Activated B cell treated with CpG ODN at 0.5 μM for 24 hours (primary cell): ENCODE measurements at regions of chr1 and their contacts with region 1.

Region 1: GRCh38 chr1:153633716-153634665 is at the start of gene CHTOP:
- DNase-seq: peak; percentile 98
- ATAC-seq: peak; percentile 86
- H3K4me3 Mint-ChIP-seq: peak within 1 kb of the TSS; percentile 99
- H3K27ac Mint-ChIP-seq: peak within 1 kb of the TSS; percentile 100
- H3K4me1 Mint-ChIP-seq: peaks cover 44% of the 10 kb centered on the region
- H3K27me3 Mint-ChIP-seq: no peaks in the 10 kb centered on the region
- CTCF ChIP-seq: no peak
- total RNA-seq, gene CHTOP: 140 and 148 TPM in 2 replicates

Region 2: DNA sequence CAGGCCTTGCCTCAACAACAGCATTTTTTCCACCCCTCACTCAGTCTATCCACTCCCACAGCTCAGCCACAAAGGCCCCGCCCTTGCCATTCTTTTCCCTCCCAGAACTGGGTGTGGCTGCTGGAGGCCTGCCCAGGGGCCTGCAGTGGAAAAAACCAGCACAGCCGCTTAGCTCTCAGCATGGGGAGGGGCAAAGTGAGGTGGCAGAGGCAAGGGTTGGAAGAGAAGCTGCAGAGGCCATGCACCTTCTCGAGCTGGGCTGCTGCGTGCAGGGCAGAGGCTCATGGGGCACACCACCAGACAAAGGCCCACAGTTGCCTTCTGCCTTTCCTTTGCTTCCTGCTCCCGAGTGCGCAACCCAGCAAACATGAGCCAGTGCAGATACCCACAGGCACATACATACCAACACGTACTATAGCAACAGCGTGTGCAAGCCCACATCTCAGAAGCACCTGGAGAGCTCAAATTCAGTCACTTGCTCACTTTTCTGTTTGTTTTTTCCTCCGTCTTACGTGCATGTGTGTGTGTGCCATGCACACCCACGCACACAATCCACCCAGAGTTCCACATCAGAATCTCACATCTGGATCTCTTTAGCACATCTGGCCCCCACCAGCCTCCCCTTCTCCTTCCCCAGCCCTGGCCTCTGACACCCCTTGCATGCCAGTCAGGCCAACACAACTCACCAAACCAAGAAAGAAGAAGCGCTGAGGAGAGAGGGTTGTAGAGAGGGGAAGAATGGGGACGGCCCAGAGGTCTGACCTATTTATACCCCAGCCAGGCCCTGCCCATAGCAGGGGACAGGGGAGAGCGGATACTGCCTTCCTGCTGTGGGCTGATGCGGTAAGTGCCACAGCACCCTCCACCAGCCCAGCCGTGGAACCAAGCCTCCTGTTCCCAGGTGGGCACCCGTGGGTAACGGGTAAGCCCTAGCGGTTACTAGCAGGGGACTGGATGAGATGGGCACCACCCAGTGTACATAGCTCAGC is 88.6 kb before region 1 on chr1 and contains the start of gene S100A4:
- CTCF ChIA-PET with region 1: interaction called, 3 read pairs
- POLR2A ChIA-PET with region 1: interaction called, 30 read pairs
- intact Hi-C with region 1: no loop called
- DNase-seq: peak; percentile 56
- ATAC-seq: peak; percentile 78
- H3K4me3 Mint-ChIP-seq: peak within 1 kb of the TSS; percentile 95
- H3K27ac Mint-ChIP-seq: peak within 1 kb of the TSS; percentile 97
- H3K4me1 Mint-ChIP-seq: peaks cover 58% of the 10 kb centered on the region
- H3K27me3 Mint-ChIP-seq: peaks cover 2% of the 10 kb centered on the region
- CTCF ChIP-seq: no peak
- total RNA-seq, gene S100A4: 315 and 398 TPM in 2 replicates

Region 3: GRCh38 chr1:153577624-153578051 is 56.4 kb before region 1 on chr1:
- CTCF ChIA-PET with region 1: interaction called, 38 read pairs
- POLR2A ChIA-PET with region 1: interaction called, 65 read pairs
- intact Hi-C with region 1: loop called (anchors 1 kb)
- DNase-seq: no peak
- ATAC-seq: no peak
- H3K4me3 Mint-ChIP-seq: no peak overlapping the region
- H3K27ac Mint-ChIP-seq: no peak overlapping the region
- H3K4me1 Mint-ChIP-seq: peaks cover 10% of the 10 kb centered on the region
- H3K27me3 Mint-ChIP-seq: peaks cover 4% of the 10 kb centered on the region
- CTCF ChIP-seq: no peak

Region 4: GRCh38 chr1:153646672-153647374 is 12.8 kb after region 1 on chr1:
- CTCF ChIA-PET with region 1: no interaction called
- POLR2A ChIA-PET with region 1: interaction called, 29 read pairs
- intact Hi-C with region 1: no loop called
- DNase-seq: no peak
- ATAC-seq: no peak
- H3K4me3 Mint-ChIP-seq: no peak overlapping the region
- H3K27ac Mint-ChIP-seq: peak overlapping the region; percentile 71
- H3K4me1 Mint-ChIP-seq: peaks cover 12% of the 10 kb centered on the region
- H3K27me3 Mint-ChIP-seq: no peaks in the 10 kb centered on the region
- CTCF ChIP-seq: no peak

Region 5: DNA sequence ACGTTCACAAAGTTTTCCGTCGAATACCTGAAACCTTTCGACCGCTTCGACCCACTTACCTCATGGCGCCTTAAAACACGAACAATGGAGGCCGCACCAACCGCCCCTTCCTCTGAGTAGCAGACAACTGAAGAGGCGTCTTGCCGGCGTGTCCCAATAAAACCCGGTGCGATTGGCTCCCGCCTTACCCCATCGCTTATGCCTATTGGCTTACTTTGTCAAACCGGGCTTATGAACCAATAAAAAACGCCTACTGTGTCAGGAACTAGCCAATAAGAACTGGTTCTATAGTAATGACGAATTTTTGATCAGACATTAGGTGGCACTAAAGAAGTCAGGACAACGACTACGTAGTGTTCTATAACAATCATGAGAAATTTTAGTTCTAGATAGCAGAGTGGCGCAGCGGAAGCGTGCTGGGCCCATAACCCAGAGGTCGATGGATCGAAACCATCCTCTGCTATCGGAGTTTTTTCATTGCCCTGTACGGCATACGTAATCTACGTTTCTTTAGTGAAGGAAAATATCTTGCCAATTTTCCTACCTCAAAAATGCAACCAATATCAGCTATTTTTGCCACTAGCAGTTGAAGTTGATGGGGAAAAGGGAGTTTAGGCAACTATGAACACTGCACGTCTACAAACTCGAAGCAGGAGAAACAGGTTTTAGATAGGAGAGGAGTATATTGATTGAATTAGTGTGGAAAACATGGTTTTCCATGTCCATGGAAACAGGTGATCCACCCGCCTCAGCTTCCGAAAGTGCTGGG is 37.1 kb after region 1 on chr1 and contains the start of gene ILF2:
- CTCF ChIA-PET with region 1: interaction called, 3 read pairs
- POLR2A ChIA-PET with region 1: interaction called, 34 read pairs
- intact Hi-C with region 1: loop called (anchors 1 kb)
- DNase-seq: peak; percentile 85
- ATAC-seq: peak; percentile 83
- H3K4me3 Mint-ChIP-seq: no peak within 1 kb of the TSS
- H3K27ac Mint-ChIP-seq: no peak within 1 kb of the TSS
- H3K4me1 Mint-ChIP-seq: peaks cover 28% of the 10 kb centered on the region
- H3K27me3 Mint-ChIP-seq: no peaks in the 10 kb centered on the region
- CTCF ChIP-seq: no peak
- total RNA-seq, gene ILF2: 182 and 191 TPM in 2 replicates

Region 6: GRCh38 chr1:153967082-153968000 is 333.4 kb after region 1 on chr1 and contains the start of gene CREB3L4:
- CTCF ChIA-PET with region 1: no interaction called
- POLR2A ChIA-PET with region 1: interaction called, 10 read pairs
- intact Hi-C with region 1: no loop called
- DNase-seq: peak; percentile 72
- ATAC-seq: peak; percentile 85
- H3K4me3 Mint-ChIP-seq: peak within 1 kb of the TSS; percentile 96
- H3K27ac Mint-ChIP-seq: peak within 1 kb of the TSS; percentile 97
- H3K4me1 Mint-ChIP-seq: peaks cover 62% of the 10 kb centered on the region
- H3K27me3 Mint-ChIP-seq: no peaks in the 10 kb centered on the region
- CTCF ChIP-seq: no peak
- total RNA-seq, gene CREB3L4: 9.4 and 10.2 TPM in 2 replicates